H1 (cell line): ENCODE measurements at regions of chr19 and their contacts with region 1.

Region 1: DNA sequence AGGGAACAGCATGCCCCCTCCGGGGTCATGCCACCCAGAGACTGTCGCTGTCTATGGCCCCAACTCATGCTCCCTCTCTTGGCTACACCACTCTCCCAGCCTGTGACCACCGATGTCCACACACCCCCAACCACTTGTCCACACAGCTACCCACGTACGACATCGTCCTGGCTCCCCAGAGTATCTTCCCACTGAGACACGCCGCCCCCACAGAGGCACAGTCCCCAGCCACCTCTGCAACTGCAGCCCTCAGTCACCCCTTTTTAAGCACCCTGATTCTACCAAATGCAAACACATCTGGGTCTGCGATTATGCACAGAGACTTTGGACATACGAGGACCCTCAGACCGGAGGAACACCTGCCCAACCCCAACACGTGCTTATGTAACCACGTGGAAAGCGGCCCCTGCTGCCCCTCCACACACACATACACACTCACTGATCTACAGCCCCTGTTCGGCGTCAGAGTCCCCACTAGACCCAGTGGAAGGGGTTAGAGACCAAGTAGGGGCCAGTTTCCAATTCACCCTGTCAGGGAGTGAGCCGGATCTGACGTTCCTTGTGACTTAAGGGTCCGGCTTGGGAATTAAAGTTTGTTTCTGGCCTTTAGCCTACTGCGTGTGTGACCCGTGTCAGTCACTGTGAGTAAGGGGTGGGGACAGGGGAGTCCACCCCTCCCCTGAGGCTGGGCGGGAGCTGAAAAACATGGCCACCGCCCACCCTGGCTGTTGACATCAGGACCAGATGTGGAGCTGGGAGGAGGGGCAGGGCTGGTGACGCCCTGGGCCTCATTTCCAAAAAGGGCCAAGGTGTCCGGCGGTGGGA is 11.9 kb upstream of the AXL start:
- DNase-seq: no peak
- H3K4me3 ChIP-seq: no peak overlapping the region
- H3K27ac ChIP-seq: no peak overlapping the region
- H3K4me1 ChIP-seq: no peaks in the 10 kb centered on the region
- H3K27me3 ChIP-seq: no peaks in the 10 kb centered on the region
- CTCF ChIP-seq: no peak
- EP300 ChIP-seq: no peak
- POLR2A ChIP-seq: no peak
- RAD21 ChIP-seq: no peak

Region 2: DNA sequence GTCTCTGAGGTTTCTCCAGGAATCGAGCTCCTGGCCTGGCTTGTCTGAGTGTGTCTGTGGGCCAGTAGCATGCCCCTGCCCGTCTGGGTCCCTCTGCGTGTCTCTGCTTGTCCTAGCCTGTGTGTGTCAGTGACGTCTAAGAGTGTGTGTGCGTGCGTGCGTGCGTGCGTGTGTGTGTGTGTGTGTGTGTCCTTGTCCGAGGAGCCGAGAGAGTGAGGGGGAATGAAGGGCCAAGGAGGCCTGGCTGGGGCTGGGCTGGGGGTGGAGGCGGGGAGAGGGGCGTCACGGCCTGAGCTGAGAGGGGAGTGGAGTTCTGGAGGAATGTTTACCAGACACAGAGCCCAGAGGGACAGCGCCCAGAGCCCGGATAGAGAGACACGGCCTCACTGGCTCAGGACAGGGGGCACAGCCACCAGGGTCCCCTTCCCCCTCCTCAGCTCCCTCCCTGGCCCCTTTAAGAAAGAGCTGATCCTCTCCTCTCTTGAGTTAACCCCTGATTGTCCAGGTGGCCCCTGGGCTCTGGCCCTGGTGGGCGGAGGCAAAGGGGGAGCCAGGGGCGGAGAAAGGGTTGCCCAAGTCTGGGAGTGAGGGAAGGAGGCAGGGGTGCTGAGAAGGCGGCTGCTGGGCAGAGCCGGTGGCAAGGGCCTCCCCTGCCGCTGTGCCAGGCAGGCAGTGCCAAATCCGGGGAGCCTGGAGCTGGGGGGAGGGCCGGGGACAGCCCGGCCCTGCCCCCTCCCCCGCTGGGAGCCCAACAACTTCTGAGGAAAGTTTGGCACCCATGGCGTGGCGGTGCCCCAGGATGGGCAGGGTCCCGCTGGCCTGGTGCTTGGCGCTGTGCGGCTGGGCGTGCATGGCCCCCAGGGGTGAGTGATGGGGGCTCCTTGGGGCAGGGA is 11.7 kb after region 1 on chr19 and contains the start of gene AXL:
- CTCF ChIA-PET with region 1: interaction called, 15 read pairs
- POLR2A ChIA-PET with region 1: interaction called, 40 read pairs
- DNase-seq: peak; percentile 78 to 90
- H3K4me3 ChIP-seq: peak within 1 kb of the TSS; percentile 32 to 89 (median 61)
- H3K27ac ChIP-seq: peak within 1 kb of the TSS; percentile 56; the same call in 1 of the 2 replicates
- H3K4me1 ChIP-seq: peaks cover 0 to 17% (median 13%) of the 10 kb centered on the region in 4 experiments; a peak in 6 of 7 replicates
- H3K27me3 ChIP-seq: no peaks in the 10 kb centered on the region
- CTCF ChIP-seq: no peak
- EP300 ChIP-seq: peak in 1 of 2 experiments; percentile 63; a peak in 1 of 3 replicates
- POLR2A ChIP-seq: peak in 1 of 2 experiments; percentile 25; a peak in 1 of 3 replicates
- RAD21 ChIP-seq: 0 out of 4 replicates have a peak, but pooled peaks have one; percentile 0 to 14
- total RNA-seq, gene AXL: 51.0 and 53.3 TPM in 2 replicates

Region 3: DNA sequence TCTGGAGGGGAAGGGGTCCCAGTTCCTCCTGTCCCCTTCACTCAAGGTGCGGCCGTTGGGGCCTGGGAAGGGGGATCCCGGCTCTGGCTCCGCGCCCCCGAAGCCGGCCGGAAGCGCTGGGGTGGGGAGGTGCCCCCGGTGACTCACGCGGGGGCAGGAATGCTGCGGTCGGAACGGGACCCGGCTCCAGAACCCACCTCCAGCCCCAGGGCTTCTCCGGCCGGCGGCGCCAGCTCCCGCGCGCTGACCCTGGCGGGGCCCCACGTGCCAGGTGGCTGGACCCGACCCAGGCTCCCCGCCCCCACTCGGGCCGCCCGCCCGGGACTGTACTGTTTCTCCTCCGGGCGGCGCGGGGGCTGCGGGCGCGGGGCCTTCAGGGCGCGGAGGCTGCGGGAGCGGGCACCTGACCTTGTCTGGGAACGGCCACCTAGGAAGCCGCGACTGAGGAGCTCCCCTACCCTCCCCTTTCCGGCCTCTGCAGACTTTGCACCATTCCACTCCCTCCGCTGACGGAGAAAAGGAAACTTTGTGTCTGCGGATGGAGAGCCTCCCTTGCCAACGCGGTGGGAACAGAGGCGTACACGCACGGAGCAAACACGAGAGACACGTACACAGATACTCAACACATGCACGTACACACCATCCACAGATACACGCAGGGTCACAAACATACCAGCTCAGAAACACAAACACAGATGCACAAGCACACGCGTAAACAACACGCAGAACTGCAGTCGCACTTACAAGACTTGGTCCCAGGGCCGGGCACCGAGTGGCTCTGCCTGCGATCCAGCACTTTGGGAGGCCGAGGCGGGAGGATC is 19.1 kb after region 1 on chr19:
- CTCF ChIA-PET with region 1: interaction called, 15 read pairs
- POLR2A ChIA-PET with region 1: interaction called, 40 read pairs
- DNase-seq: peak in 1 of 2 experiments; percentile 79
- H3K4me3 ChIP-seq: peak overlapping the region; percentile 24 to 56 (median 38)
- H3K27ac ChIP-seq: peak overlapping the region; percentile 54
- H3K4me1 ChIP-seq: peaks cover 8 to 26% (median 17%) of the 10 kb centered on the region in 4 experiments
- H3K27me3 ChIP-seq: no peaks in the 10 kb centered on the region
- CTCF ChIP-seq: no peak
- EP300 ChIP-seq: no peak
- POLR2A ChIP-seq: peak in 1 of 2 experiments; percentile 63; a peak in 2 of 3 replicates
- RAD21 ChIP-seq: no peak

Region 4: GRCh38 chr19:41426952-41427646 is 220.0 kb after region 1 on chr19 and contains the start of gene B3GNT8:
- CTCF ChIA-PET with region 1: no interaction called
- POLR2A ChIA-PET with region 1: no interaction called
- DNase-seq: peak; percentile 56 to 88
- H3K4me3 ChIP-seq: peak within 1 kb of the TSS; percentile 40 to 77 (median 54); a peak in 7 of 8 replicates
- H3K27ac ChIP-seq: peak within 1 kb of the TSS; percentile 47; the same call in 1 of the 2 replicates
- H3K4me1 ChIP-seq: peaks cover 0 to 18% (median 4%) of the 10 kb centered on the region in 4 experiments; a peak in 5 of 7 replicates
- H3K27me3 ChIP-seq: no peaks in the 10 kb centered on the region
- CTCF ChIP-seq: no peak
- EP300 ChIP-seq: no peak
- POLR2A ChIP-seq: no peak; a peak in 1 of 3 replicates
- RAD21 ChIP-seq: no peak
- total RNA-seq, gene B3GNT8: 0.86 and 1.6 TPM in 2 replicates